CD4-positive, alpha-beta T cell (primary cell): ENCODE measurements at regions of chr4 and their contacts with region 1.

Region 1: DNA sequence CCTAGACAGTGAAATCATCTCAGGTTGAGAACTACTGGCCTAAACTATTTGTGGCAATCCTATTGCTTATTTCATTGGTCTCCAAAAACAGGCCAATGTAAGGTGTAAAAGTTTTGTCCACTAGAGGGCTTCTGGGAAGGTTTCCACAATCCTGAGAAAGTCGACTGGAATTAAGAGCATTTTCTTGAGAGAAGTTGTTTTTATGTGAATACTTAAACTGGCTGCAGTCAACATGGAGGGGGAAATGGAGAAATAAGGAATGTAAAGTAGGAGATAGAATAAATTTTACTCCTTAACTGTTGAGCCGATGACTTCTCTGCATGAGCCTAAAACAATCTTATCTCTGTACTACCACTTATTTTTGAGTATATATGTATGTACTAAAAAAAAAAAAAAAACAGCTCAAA is 11.0 kb upstream of the EIF4E start:
- DNase-seq: peak in 3 of 14 experiments; percentile 30 to 56 (median 54)
- ATAC-seq: peak; percentile 52
- H3K4me3 ChIP-seq: no peak overlapping the region
- H3K4me3 Mint-ChIP-seq: no peak overlapping the region
- H3K27ac ChIP-seq: no peak overlapping the region
- H3K27ac Mint-ChIP-seq: no peak overlapping the region
- H3K4me1 ChIP-seq: no peaks in the 10 kb centered on the region
- H3K4me1 Mint-ChIP-seq: peaks cover 7% of the 10 kb centered on the region
- H3K27me3 ChIP-seq: no peaks in the 10 kb centered on the region
- H3K27me3 Mint-ChIP-seq: no peaks in the 10 kb centered on the region
- CTCF ChIP-seq: peak; percentile 72

Region 2: DNA sequence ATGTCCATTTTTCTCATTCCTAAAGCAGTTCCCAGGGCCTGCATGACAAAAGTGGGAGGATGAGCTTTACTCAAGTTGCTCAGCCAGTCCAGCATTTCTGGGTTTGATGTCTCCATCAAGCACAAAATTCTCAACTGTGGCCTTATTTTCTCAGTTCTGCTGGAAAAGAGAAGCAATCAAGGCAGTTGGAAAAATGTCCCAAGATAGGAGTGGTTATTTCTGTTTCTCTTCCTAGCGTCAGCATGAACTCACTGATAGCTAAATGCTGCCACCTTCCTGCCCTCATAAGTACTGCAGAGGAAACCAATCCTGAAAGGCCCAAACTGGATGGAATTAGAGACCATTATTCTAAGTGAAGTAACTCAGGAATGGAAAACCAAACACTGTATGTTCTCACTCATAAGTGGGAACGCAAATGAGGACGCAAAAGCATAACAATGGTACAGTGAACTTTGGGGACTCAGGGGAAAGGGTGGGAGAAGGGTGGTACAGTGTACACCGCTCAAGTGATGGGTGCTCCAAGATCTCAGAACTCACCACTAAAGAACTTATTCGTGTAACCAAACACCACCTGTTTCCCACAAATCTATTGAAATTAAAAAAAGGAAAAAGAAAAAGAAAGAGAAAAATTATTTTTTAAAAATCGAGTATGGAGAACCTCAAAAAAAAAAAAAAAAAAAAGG is 465.7 kb after region 1 on chr4:
- CTCF ChIA-PET with region 1: no interaction called
- POLR2A ChIA-PET with region 1: no interaction called
- intact Hi-C with region 1: loop called (anchors 5 kb)
- DNase-seq: peak; percentile 15 to 75 (median 48)
- ATAC-seq: peak; percentile 79
- H3K4me3 ChIP-seq: no peak overlapping the region
- H3K4me3 Mint-ChIP-seq: no peak overlapping the region
- H3K27ac ChIP-seq: no peak overlapping the region
- H3K27ac Mint-ChIP-seq: no peak overlapping the region
- H3K4me1 ChIP-seq: no peaks in the 10 kb centered on the region
- H3K4me1 Mint-ChIP-seq: peaks cover 5% of the 10 kb centered on the region
- H3K27me3 ChIP-seq: no peaks in the 10 kb centered on the region
- H3K27me3 Mint-ChIP-seq: no peaks in the 10 kb centered on the region
- CTCF ChIP-seq: peak; percentile 86